ENCODE measurements at regions of chr12 and their contacts with region 1.

Region 1: GRCh38 chr12:18302809-18303430 is 41.6 kb downstream of the PIK3C2G start:
- DNase-seq: no peak
- ATAC-seq: no peak
- H3K4me3 ChIP-seq: no peak overlapping the region
- H3K27ac ChIP-seq: no peak overlapping the region
- H3K4me1 ChIP-seq: no peaks in the 10 kb centered on the region
- H3K27me3 ChIP-seq: no peaks in the 10 kb centered on the region
- CTCF ChIP-seq: no peak
- POLR2A ChIP-seq: no peak

Region 2: GRCh38 chr12:17680220-17680619 is 622.7 kb before region 1 on chr12:
- intact Hi-C with region 1: no loop called
- DNase-seq: no peak
- ATAC-seq: no peak
- H3K4me3 ChIP-seq: no peak overlapping the region
- H3K27ac ChIP-seq: no peak overlapping the region
- H3K4me1 ChIP-seq: no peaks in the 10 kb centered on the region
- H3K27me3 ChIP-seq: no peaks in the 10 kb centered on the region
- CTCF ChIP-seq: no peak
- POLR2A ChIP-seq: no peak

Region 3: DNA sequence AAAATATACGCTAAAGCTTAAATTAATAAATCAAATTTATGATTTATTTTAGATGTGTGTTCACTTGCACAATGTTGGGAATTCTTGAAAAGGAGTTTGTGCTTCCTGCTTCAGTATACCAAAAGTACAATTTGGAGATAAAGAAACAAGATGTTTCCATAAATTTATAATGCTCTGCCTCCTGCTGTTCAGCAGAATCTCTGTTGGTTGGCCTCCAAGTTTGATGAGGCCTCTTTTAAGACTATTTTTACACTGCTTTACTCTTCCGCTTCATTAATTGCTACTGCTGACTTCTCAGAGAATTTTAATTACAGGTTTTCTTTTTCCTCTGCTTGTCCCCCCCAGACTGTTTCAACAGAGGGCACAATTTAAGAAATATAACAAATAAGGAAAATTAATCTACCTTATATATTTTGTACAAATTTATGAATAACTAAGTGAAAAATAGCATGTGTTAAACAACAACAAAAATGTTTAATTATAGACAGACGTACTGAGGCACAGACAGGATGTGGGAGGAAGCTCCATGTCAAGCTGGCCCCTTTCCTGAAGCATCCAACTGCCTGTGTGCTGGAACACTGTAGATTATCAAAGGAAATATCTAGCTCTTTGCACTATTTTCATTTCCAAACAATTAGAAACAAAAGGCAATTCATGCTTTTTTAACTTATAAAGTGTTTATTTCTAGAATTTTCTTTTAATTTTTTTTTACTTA is 42.3 kb after region 1 on chr12:
- intact Hi-C with region 1: no loop called
- DNase-seq: no peak
- ATAC-seq: no peak
- H3K4me3 ChIP-seq: peak overlapping the region in 1 of 12 donors; percentile 14
- H3K27ac ChIP-seq: peak overlapping the region in 3 of 12 donors; percentile 13 to 28 (median 16)
- H3K4me1 ChIP-seq: peaks cover 0 to 9% (median 1%) of the 10 kb centered on the region in 12 donors
- H3K27me3 ChIP-seq: no peaks in the 10 kb centered on the region
- CTCF ChIP-seq: peak in 2 of 12 donors; percentile 3 to 13
- POLR2A ChIP-seq: no peak

Region 4: DNA sequence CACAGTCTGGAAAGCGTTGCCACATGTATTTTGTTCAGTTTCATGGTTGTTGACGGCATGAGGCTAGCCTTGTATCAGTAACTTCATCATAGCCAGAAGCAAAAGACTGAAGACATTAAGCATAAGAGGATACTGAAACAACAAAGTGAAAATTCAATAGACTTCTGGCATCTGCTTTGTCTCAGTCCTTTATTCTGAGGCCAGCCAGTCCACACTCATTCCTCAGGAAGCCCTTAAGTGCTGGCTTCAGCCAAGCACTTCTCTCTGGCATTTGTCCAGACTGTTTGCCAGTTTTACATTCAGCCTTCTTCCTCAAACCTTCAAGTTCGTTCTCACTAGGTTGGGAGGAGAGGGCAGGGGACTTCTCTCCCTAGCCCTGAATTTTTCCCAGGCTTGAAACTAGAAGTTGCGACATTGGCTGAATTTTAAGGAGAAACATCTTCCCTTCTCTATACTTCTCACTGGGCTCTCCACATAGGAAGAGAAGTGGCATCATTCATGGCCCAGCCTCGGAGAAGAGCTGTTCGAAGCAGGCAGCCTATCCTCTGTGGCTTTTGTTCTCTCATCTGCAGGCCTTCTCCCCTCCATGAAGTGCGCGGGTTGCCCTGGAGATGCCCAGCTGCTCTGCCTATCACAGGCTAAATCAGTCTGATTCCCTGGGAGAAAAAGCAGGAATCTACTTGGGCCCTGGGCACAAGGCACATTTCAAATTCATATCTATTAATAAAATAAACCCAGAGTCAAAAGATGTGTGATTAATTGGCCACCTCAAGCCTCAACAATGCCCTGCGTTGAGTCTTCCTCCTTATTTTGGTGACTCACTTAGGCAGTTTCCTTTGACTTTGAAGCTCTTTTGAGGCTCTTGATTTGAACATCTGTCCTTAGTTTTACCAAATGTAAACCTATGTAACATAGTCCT is 695.7 kb after region 1 on chr12:
- intact Hi-C with region 1: loop called in 1 of 10 experiments (anchors 10 kb)
- DNase-seq: no peak
- ATAC-seq: no peak
- H3K4me3 ChIP-seq: no peak overlapping the region
- H3K27ac ChIP-seq: no peak overlapping the region
- H3K4me1 ChIP-seq: no peaks in the 10 kb centered on the region
- H3K27me3 ChIP-seq: no peaks in the 10 kb centered on the region
- CTCF ChIP-seq: no peak
- POLR2A ChIP-seq: no peak

Measured in heart left ventricle (tissue), 16 donors.